Sigmoid colon (tissue), 7 donors: ENCODE measurements at regions of chr1 and their contacts with region 1.

Region 1: GRCh38 chr1:175035865-175036264 is 12.6 kb upstream of the MRPS14 start:
- DNase-seq: no peak
- H3K4me3 ChIP-seq: no peak overlapping the region
- H3K27ac ChIP-seq: no peak overlapping the region
- H3K4me1 ChIP-seq: peaks cover 0 to 10% (median 4%) of the 10 kb centered on the region in 4 donors
- H3K27me3 ChIP-seq: no peaks in the 10 kb centered on the region
- CTCF ChIP-seq: no peak
- EP300 ChIP-seq: no peak
- POLR2A ChIP-seq: no peak

Region 2: DNA sequence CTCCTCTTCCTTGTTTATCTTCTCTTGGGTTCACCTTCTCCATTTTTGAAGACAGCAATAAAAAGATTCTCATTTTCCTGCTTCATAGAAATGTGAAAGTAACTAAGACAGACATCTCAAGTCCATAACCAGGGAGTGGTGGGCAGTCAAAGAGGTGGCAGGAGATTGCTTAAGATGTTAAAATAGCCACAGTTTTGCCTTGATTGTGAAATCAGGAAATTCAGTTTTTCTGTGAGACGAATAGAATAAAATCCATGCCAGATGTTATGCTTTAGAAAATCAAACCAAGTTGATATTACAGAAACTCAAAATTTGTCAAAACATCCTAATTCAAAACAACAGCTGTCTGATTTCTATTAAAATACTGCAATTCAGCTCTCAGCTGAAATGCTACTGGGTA is 89.0 kb after region 1 on chr1:
- intact Hi-C with region 1: loop called (anchors 1 kb)
- DNase-seq: no peak
- H3K4me3 ChIP-seq: no peak overlapping the region
- H3K27ac ChIP-seq: peak overlapping the region; percentile 33 to 49 (median 35)
- H3K4me1 ChIP-seq: peaks cover 0 to 39% (median 32%) of the 10 kb centered on the region in 4 donors
- H3K27me3 ChIP-seq: no peaks in the 10 kb centered on the region
- CTCF ChIP-seq: no peak
- EP300 ChIP-seq: no peak
- POLR2A ChIP-seq: no peak

Region 3: GRCh38 chr1:175152037-175152652 is 116.3 kb after region 1 on chr1:
- intact Hi-C with region 1: loop called (anchors 2 kb)
- DNase-seq: peak; percentile 77
- H3K4me3 ChIP-seq: no peak overlapping the region
- H3K27ac ChIP-seq: no peak overlapping the region
- H3K4me1 ChIP-seq: peaks cover 0 to 14% (median 10%) of the 10 kb centered on the region in 4 donors
- H3K27me3 ChIP-seq: no peaks in the 10 kb centered on the region
- CTCF ChIP-seq: peak; percentile 15 to 84 (median 67)
- EP300 ChIP-seq: no peak
- POLR2A ChIP-seq: no peak